B cell (primary cell): ENCODE measurements at regions of chr9 and their contacts with region 1.

Region 1: GRCh38 chr9:105414947-105415661 is 32.7 kb upstream of the FSD1L start:
- DNase-seq: peak; percentile 77
- ATAC-seq: peak; percentile 81
- H3K4me3 ChIP-seq: no peak overlapping the region
- H3K4me3 Mint-ChIP-seq: no peak overlapping the region
- H3K27ac ChIP-seq: no peak overlapping the region
- H3K27ac Mint-ChIP-seq: no peak overlapping the region
- H3K4me1 ChIP-seq: peaks cover 3 to 4% of the 10 kb centered on the region in 2 donors
- H3K4me1 Mint-ChIP-seq: peaks cover 4% of the 10 kb centered on the region
- H3K27me3 ChIP-seq: no peaks in the 10 kb centered on the region
- H3K27me3 Mint-ChIP-seq: no peaks in the 10 kb centered on the region
- CTCF ChIP-seq: peak; percentile 94

Region 2: DNA sequence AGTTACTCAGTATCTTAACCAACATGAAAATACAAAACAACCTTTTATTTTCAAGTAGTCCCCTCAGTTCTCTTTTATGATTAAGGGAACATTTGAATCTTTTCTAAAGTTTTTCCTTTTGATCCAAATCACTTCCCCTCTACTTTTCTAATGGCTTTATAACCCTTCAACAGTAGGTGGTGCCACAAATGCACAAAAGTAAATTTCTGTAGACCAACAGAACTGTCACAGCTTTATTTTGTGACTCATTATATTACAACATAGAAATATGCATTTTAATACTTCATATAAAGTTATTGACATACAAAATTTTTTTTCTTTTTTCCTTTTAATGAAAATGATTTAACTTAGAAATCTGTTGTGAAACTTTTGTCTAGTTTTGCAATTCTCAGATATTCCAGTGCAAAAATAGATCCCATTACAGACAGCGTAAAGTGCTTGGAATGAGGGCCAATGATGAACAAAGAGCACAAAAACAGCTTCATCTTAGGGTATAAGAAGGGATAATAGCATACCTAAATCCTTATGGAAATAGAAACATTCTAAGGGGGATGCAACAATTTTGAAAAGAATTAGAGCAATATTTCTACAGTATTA is 634.2 kb before region 1 on chr9:
- CTCF ChIA-PET with region 1: interaction called, 9 read pairs
- POLR2A ChIA-PET with region 1: no interaction called
- intact Hi-C with region 1: loop called (anchors 1 kb)
- DNase-seq: peak; percentile 30
- ATAC-seq: no peak
- H3K4me3 ChIP-seq: no peak overlapping the region
- H3K4me3 Mint-ChIP-seq: no peak overlapping the region
- H3K27ac ChIP-seq: no peak overlapping the region
- H3K27ac Mint-ChIP-seq: peak overlapping the region; percentile 7
- H3K4me1 ChIP-seq: peaks cover 26 to 43% of the 10 kb centered on the region in 2 donors
- H3K4me1 Mint-ChIP-seq: peaks cover 35% of the 10 kb centered on the region
- H3K27me3 ChIP-seq: no peaks in the 10 kb centered on the region
- H3K27me3 Mint-ChIP-seq: no peaks in the 10 kb centered on the region
- CTCF ChIP-seq: peak; percentile 69

Region 3: GRCh38 chr9:104808035-104808614 is 607.0 kb before region 1 on chr9:
- CTCF ChIA-PET with region 1: interaction called, 6 read pairs
- POLR2A ChIA-PET with region 1: no interaction called
- intact Hi-C with region 1: loop called (anchors 2 kb)
- DNase-seq: no peak
- ATAC-seq: no peak
- H3K4me3 ChIP-seq: no peak overlapping the region
- H3K4me3 Mint-ChIP-seq: no peak overlapping the region
- H3K27ac ChIP-seq: no peak overlapping the region
- H3K27ac Mint-ChIP-seq: no peak overlapping the region
- H3K4me1 ChIP-seq: no peaks in the 10 kb centered on the region
- H3K4me1 Mint-ChIP-seq: no peaks in the 10 kb centered on the region
- H3K27me3 ChIP-seq: no peaks in the 10 kb centered on the region
- H3K27me3 Mint-ChIP-seq: no peaks in the 10 kb centered on the region
- CTCF ChIP-seq: no peak

Region 4: GRCh38 chr9:105157130-105157583 is 257.9 kb before region 1 on chr9:
- CTCF ChIA-PET with region 1: interaction called, 9 read pairs
- POLR2A ChIA-PET with region 1: no interaction called
- intact Hi-C with region 1: loop called (anchors 1 kb)
- DNase-seq: peak; percentile 59
- ATAC-seq: peak; percentile 63
- H3K4me3 ChIP-seq: no peak overlapping the region
- H3K4me3 Mint-ChIP-seq: no peak overlapping the region
- H3K27ac ChIP-seq: no peak overlapping the region
- H3K27ac Mint-ChIP-seq: no peak overlapping the region
- H3K4me1 ChIP-seq: no peaks in the 10 kb centered on the region
- H3K4me1 Mint-ChIP-seq: peaks cover 3% of the 10 kb centered on the region
- H3K27me3 ChIP-seq: no peaks in the 10 kb centered on the region
- H3K27me3 Mint-ChIP-seq: no peaks in the 10 kb centered on the region
- CTCF ChIP-seq: peak; percentile 56